SK-N-SH (cell line): ENCODE measurements at regions of chr7 and their contacts with region 1.

Region 1: DNA sequence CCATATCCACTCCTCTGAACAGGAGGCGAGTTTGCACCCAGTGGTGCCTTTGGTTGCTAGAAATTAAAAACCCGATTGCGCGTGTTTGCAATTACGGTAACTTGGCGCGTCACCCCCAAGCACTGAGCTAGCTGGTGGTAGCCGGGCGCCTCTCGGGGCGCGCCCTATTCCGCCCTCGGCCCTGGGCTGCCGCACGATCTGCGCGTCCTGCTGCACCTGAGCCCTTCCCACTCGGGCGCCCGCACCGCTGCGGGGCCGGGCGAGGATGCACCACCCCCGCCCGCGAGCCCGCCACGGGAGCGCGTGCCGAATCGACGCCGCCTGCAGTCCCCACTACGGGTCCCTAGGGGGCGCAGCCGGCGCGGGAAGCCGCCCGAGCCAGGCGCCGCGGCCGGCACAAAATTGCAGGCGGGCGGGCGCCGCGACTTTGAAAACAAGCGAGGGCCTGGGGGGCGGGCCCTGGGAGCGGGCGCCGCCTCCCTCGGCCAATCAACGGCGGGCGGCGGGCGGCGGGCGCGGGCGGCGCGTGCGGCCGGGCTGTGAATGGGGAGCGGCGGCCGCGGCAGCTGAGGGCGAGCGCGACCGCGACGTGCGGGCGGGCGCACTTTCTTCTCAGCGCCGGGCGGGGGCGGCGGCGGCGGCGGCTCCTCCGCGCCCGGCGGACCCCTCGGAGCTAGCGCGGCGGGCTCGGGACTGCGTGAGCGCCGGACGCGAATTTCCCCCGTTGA is at the start of gene SDK1:
- DNase-seq: peak; percentile 98
- H3K4me3 ChIP-seq: peak within 1 kb of the TSS; percentile 62 to 63
- H3K27ac ChIP-seq: peak within 1 kb of the TSS in 1 of 2 experiments; percentile 47; a peak in 1 of 4 replicates
- H3K4me1 ChIP-seq: peaks cover 0 to 15% of the 10 kb centered on the region in 2 experiments; a peak in 2 of 4 replicates
- H3K27me3 ChIP-seq: peaks cover 12% of the 10 kb centered on the region; the same call in 1 of the 2 replicates
- CTCF ChIP-seq: peak; percentile 78
- EP300 ChIP-seq: 0 out of 4 replicates have a peak, but pooled peaks of 1 of the 2 experiments have one; percentile 7
- RAD21 ChIP-seq: peak; percentile 85
- polyA plus RNA-seq, gene SDK1: 0.96 and 1.2 TPM in 2 replicates

Region 2: DNA sequence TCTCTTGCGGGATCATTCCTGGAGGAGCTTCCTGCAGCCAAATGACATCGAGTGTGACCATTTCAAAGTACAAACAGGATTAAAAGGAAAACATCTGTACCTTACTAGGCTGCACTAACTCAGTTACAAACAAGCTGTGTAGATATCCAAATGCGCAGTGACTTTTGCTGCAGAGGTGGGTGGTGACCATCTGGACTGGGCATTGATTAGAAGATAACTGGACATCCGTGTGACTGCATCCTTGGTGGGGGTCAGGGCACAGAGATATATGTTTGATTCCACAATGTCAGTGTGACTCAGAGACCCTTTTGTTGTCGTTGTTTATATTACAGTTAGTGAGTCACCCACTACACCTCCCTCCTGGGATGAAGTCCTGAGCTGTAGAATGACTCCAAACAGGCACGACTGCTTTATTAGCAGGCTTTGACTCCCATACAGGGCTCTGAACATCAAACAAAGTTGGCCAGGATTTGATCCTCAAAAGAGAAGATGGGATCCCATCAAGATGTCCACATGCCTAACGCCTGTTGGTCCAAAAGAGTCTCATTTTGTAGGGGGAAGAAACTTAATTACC is 56.5 kb before region 1 on chr7:
- CTCF ChIA-PET with region 1: interaction called, 12 read pairs
- POLR2A ChIA-PET with region 1: interaction called, 3 read pairs
- DNase-seq: peak; percentile 83
- H3K4me3 ChIP-seq: no peak overlapping the region
- H3K27ac ChIP-seq: peak overlapping the region in 1 of 2 experiments; percentile 92; a peak in 2 of 4 replicates
- H3K4me1 ChIP-seq: peaks cover 0 to 35% of the 10 kb centered on the region in 2 experiments; a peak in 2 of 4 replicates
- H3K27me3 ChIP-seq: no peaks in the 10 kb centered on the region
- CTCF ChIP-seq: no peak
- EP300 ChIP-seq: peak in 1 of 2 experiments; percentile 94; a peak in 2 of 4 replicates
- RAD21 ChIP-seq: peak; percentile 30; the same call in 1 of the 2 replicates

Region 3: DNA sequence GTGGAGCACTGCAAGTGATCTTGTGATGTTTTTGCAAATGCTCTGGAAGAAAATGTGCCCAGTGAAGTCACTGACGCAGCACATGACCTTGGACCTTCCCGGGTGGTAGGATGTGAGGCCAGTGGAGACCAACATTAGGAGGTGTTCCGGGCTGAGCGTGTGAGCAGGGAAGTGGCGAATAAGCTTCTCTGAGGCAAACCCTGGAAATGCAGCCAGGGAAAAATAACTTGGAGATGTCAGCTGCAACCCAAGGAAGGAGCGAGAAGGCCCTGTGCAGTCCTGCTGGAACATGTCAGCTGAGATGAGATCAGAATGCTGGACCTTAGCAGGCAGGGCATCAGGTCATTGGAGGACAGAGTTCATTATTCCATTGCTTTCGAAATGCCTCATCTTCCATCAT is 18.4 kb before region 1 on chr7:
- CTCF ChIA-PET with region 1: interaction called, 36 read pairs
- POLR2A ChIA-PET with region 1: no interaction called
- DNase-seq: no peak
- H3K4me3 ChIP-seq: no peak overlapping the region
- H3K27ac ChIP-seq: no peak overlapping the region
- H3K4me1 ChIP-seq: no peaks in the 10 kb centered on the region
- H3K27me3 ChIP-seq: no peaks in the 10 kb centered on the region
- CTCF ChIP-seq: no peak
- EP300 ChIP-seq: no peak
- RAD21 ChIP-seq: no peak

Region 4: DNA sequence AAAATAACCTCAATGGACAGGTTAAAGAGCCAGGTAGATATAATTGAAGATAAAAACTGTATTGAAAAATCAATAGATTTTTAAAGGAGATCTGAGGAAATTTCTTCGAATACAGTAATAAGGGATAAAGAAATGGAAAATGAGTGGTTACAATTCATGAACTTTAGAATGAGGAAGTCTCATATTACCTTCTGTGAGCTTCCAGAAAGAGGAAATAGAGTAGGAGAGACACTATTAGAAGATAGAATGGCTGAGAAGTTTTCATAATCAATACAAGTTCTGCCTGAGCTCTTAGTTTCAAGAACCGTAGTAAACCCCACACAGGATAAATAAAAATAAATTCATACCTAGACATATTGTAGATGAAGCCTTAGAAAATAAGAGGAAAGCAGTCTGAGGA is 11.8 kb after region 1 on chr7:
- CTCF ChIA-PET with region 1: interaction called, 22 read pairs
- POLR2A ChIA-PET with region 1: no interaction called
- DNase-seq: no peak
- H3K4me3 ChIP-seq: no peak overlapping the region
- H3K27ac ChIP-seq: no peak overlapping the region
- H3K4me1 ChIP-seq: no peaks in the 10 kb centered on the region; a peak in 1 of 4 replicates
- H3K27me3 ChIP-seq: no peaks in the 10 kb centered on the region
- CTCF ChIP-seq: no peak
- EP300 ChIP-seq: no peak
- RAD21 ChIP-seq: no peak

Region 5: DNA sequence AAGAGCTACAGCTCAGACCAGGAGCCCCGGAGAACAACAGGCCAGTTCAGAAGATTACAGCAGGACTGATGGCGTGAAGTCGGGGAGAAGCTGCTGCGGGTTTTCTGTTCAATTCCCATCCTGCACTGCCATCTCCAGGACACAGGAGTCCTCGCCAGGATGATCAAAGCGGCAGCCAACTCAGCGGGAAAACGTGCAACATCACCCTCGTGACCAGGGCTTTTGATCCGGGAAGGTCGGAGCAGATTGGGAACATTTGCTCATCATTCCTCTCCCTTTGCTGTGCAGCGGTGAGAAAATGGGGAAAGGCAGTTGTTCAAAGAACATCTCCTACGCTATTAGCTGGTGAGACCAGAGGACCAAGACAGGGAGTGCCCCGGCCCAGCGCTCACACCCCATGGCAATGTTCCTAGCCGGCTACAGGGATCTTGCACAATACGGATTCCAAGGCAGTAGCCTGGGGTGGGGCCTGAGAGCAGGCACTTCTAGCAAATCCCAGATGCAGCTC is 1330.9 kb after region 1 on chr7:
- CTCF ChIA-PET with region 1: interaction called, 10 read pairs
- POLR2A ChIA-PET with region 1: no interaction called
- DNase-seq: peak; percentile 88
- H3K4me3 ChIP-seq: peak overlapping the region in 1 of 2 experiments; percentile 29; a peak in 1 of 4 replicates
- H3K27ac ChIP-seq: no peak overlapping the region
- H3K4me1 ChIP-seq: peaks cover 0 to 5% of the 10 kb centered on the region in 2 experiments; a peak in 1 of 4 replicates
- H3K27me3 ChIP-seq: no peaks in the 10 kb centered on the region
- CTCF ChIP-seq: peak; percentile 74
- EP300 ChIP-seq: no peak
- RAD21 ChIP-seq: peak; percentile 95